Heart left ventricle (tissue), 16 donors: ENCODE measurements at regions of chr1 and their contacts with region 1.

Region 1: GRCh38 chr1:56550138-56550858 is 29.1 kb downstream of the PLPP3 start:
- DNase-seq: no peak
- ATAC-seq: peak in 2 of 4 donors; percentile 2 to 57
- H3K4me3 ChIP-seq: no peak overlapping the region
- H3K27ac ChIP-seq: peak overlapping the region; percentile 35 to 78 (median 66)
- H3K4me1 ChIP-seq: peaks cover 37 to 99% (median 87%) of the 10 kb centered on the region in 12 donors
- H3K27me3 ChIP-seq: no peaks in the 10 kb centered on the region
- CTCF ChIP-seq: no peak
- POLR2A ChIP-seq: no peak

Region 2: GRCh38 chr1:56516539-56517252 is 33.6 kb before region 1 on chr1:
- intact Hi-C with region 1: loop called in 1 of 10 experiments (anchors 1 kb)
- DNase-seq: no peak
- ATAC-seq: peak in 3 of 4 donors; percentile 33 to 56 (median 46)
- H3K4me3 ChIP-seq: no peak overlapping the region
- H3K27ac ChIP-seq: peak overlapping the region in 11 of 12 donors; percentile 0 to 84 (median 46)
- H3K4me1 ChIP-seq: peaks cover 11 to 98% (median 58%) of the 10 kb centered on the region in 12 donors
- H3K27me3 ChIP-seq: no peaks in the 10 kb centered on the region
- CTCF ChIP-seq: no peak
- POLR2A ChIP-seq: no peak